Adrenal gland (tissue), 19 donors: ENCODE measurements at regions of chr12 and their contacts with region 1.

Region 1: DNA sequence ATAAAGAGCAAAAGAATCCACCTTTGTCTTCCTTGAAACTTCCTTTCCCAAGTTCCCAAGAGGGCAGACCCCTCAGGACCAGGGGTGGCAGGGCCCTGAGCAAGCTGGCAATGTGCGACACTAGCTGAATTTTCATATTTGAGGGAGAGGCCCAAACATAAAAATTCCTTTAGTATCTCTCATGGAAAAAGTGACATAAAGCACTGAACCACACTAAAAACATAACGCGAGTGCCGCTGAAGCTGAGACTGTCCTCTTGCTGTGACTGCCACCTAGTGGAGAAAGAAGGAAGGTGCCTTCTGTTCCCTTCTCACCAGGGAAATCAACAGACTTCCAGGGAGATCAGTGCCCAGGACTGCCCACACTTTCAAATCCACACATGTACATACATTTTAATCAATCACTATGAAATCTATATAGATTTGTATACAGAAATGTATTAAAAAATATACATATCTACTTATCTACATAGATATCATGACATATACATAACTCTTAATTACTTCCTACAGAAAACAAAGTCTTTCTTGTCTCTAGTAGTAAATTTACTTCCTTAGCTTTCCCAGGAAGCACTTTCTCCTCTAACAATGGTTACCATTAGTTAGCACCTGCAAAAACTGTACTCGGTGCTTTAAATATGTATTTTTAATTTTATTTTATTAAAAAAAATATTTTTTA is 53.8 kb downstream of the SSH1 start:
- DNase-seq: peak; percentile 83 to 95 (median 88)
- H3K4me3 ChIP-seq: no peak overlapping the region
- H3K27ac ChIP-seq: peak overlapping the region; percentile 18 to 94 (median 84)
- H3K4me1 ChIP-seq: peaks cover 6 to 41% of the 10 kb centered on the region in 2 donors
- H3K27me3 ChIP-seq: no peaks in the 10 kb centered on the region
- CTCF ChIP-seq: peak; percentile 88 to 100 (median 97)
- POLR2A ChIP-seq: peak; percentile 8 to 31

Region 2: DNA sequence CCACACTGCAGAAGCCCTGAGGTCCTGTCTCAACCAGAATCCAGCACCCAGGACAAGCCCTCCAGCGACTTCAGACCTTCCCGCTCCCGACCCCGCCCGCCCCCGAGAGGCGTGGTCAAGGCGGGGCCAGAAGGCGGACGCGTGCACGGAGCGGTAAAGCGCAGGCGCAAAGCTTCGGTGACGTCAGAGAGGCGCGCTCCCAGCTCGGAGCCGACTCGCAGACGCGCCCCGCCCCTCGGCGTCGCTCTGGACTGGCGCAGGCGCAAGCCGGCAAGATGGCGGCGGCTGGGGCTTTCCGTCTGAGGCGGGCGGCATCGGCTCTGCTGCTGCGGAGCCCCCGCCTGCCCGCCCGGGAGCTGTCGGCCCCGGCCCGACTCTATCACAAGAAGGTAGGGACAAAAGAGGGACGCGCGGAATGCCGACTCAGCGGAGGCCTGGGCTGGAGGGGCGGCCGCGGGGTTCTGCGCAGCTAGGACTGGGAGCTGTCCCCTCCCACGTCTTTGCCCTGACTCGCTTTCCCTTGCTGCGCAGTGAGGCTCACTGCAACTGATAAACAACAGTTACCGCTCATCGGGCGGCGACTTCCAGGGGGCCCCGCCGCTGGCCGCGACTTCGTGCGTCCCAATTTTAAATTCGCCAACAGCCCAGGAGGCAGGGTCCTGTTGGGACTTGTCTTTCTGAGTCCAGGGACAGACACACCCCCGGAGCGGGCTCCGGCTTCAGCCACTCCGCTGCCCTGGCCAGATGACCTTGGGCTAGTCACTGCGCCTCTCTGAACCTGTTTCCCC is 241.0 kb before region 1 on chr12 and contains the start of gene ISCU:
- intact Hi-C with region 1: loop called in 1 of 2 experiments (anchors 10 kb)
- DNase-seq: peak; percentile 97 to 99 (median 98)
- H3K4me3 ChIP-seq: peak within 1 kb of the TSS; percentile 56 to 99 (median 90)
- H3K27ac ChIP-seq: peak within 1 kb of the TSS; percentile 90 to 98 (median 94)
- H3K4me1 ChIP-seq: peaks cover 25 to 62% of the 10 kb centered on the region in 2 donors
- H3K27me3 ChIP-seq: no peaks in the 10 kb centered on the region
- CTCF ChIP-seq: no peak
- POLR2A ChIP-seq: peak; percentile 96 to 97
- total RNA-seq, gene ISCU: 272 to 1,219 (median 420) TPM

Region 3: GRCh38 chr12:108664338-108665258 is 139.0 kb before region 1 on chr12:
- intact Hi-C with region 1: loop called (anchors 5 kb)
- DNase-seq: peak; percentile 88 to 98 (median 91)
- H3K4me3 ChIP-seq: no peak overlapping the region
- H3K27ac ChIP-seq: peak overlapping the region; percentile 64 to 89 (median 87)
- H3K4me1 ChIP-seq: peaks cover 15 to 56% of the 10 kb centered on the region in 2 donors
- H3K27me3 ChIP-seq: no peaks in the 10 kb centered on the region
- CTCF ChIP-seq: peak; percentile 84 to 99 (median 98)
- POLR2A ChIP-seq: no peak

Region 4: GRCh38 chr12:108731105-108731865 is 72.3 kb before region 1 on chr12 and contains the start of gene CORO1C:
- intact Hi-C with region 1: loop called (anchors 5 to 10 kb)
- DNase-seq: peak; percentile 96 to 99 (median 98)
- H3K4me3 ChIP-seq: peak within 1 kb of the TSS; percentile 85 to 97 (median 92)
- H3K27ac ChIP-seq: peak within 1 kb of the TSS; percentile 93 to 97 (median 93)
- H3K4me1 ChIP-seq: peaks cover 0 to 25% of the 10 kb centered on the region in 2 donors
- H3K27me3 ChIP-seq: no peaks in the 10 kb centered on the region
- CTCF ChIP-seq: peak; percentile 55 to 97 (median 83)
- POLR2A ChIP-seq: peak; percentile 95 to 97
- total RNA-seq, gene CORO1C: 46.0 to 124 (median 84.2) TPM